RWPE1 (cell line): ENCODE measurements at regions of chr12 and their contacts with region 1.

Region 1: GRCh38 chr12:53224897-53225634 is 6.9 kb downstream of the RARG start:
- DNase-seq: no peak
- H3K27ac ChIP-seq: peak overlapping the region; percentile 99
- CTCF ChIP-seq: no peak

Region 2: GRCh38 chr12:53295070-53295890 is 70.2 kb after region 1 on chr12 and contains the start of gene PFDN5:
- CTCF ChIA-PET with region 1: no interaction called
- POLR2A ChIA-PET with region 1: interaction called, 13 read pairs
- DNase-seq: peak; percentile 83
- H3K27ac ChIP-seq: peak within 1 kb of the TSS; percentile 81
- CTCF ChIP-seq: no peak